HepG2 (cell line): ENCODE measurements at regions of chr4 and their contacts with region 1.

Region 1: DNA sequence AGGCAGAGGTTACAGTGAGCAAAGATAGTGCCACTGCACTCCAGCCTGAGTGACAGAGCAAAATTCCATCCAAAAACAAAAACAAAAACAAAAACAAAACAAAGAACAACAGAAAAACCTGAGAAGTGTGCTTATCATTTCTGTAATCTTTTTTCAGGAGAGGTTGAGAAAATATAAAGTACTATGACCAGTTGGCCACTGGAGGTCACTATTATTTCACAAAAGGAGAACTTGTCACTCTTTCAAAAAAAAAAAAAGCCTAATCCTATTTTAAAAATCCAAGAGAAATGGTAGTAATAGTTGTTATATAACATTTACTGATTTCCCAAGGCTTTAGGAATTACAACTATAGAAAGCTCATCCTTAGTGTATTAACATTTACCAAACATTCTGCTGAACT is 24.9 kb upstream of the RNF150 start:
- DNase-seq: peak; percentile 31
- ATAC-seq: no peak; the same call in 2 of the 3 replicates
- H3K4me3 ChIP-seq: no peak overlapping the region
- H3K27ac ChIP-seq: no peak overlapping the region
- H3K4me1 ChIP-seq: no peaks in the 10 kb centered on the region
- H3K27me3 ChIP-seq: no peaks in the 10 kb centered on the region
- CTCF ChIP-seq: peak; percentile 45
- EP300 ChIP-seq: no peak
- POLR2A ChIP-seq: no peak
- RAD21 ChIP-seq: no peak

Region 2: GRCh38 chr4:141346144-141346543 is 187.9 kb after region 1 on chr4:
- CTCF ChIA-PET with region 1: no interaction called
- POLR2A ChIA-PET with region 1: no interaction called
- in situ Hi-C with region 1: no loop called
- intact Hi-C with region 1: loop called (anchors 10 kb)
- DNase-seq: peak; percentile 13
- ATAC-seq: peak; percentile 87
- H3K4me3 ChIP-seq: no peak overlapping the region
- H3K27ac ChIP-seq: no peak overlapping the region
- H3K4me1 ChIP-seq: no peaks in the 10 kb centered on the region
- H3K27me3 ChIP-seq: no peaks in the 10 kb centered on the region
- CTCF ChIP-seq: peak; percentile 56
- EP300 ChIP-seq: no peak
- POLR2A ChIP-seq: no peak
- RAD21 ChIP-seq: peak; percentile 52; the same call in 1 of the 2 replicates

Region 3: GRCh38 chr4:141654098-141654497 is 495.9 kb after region 1 on chr4:
- CTCF ChIA-PET with region 1: no interaction called
- POLR2A ChIA-PET with region 1: no interaction called
- in situ Hi-C with region 1: no loop called
- intact Hi-C with region 1: loop called (anchors 2 kb)
- DNase-seq: no peak
- ATAC-seq: peak; percentile 91
- H3K4me3 ChIP-seq: no peak overlapping the region
- H3K27ac ChIP-seq: no peak overlapping the region
- H3K4me1 ChIP-seq: no peaks in the 10 kb centered on the region
- H3K27me3 ChIP-seq: no peaks in the 10 kb centered on the region
- CTCF ChIP-seq: peak; percentile 64
- EP300 ChIP-seq: no peak
- POLR2A ChIP-seq: no peak
- RAD21 ChIP-seq: no peak

Region 4: DNA sequence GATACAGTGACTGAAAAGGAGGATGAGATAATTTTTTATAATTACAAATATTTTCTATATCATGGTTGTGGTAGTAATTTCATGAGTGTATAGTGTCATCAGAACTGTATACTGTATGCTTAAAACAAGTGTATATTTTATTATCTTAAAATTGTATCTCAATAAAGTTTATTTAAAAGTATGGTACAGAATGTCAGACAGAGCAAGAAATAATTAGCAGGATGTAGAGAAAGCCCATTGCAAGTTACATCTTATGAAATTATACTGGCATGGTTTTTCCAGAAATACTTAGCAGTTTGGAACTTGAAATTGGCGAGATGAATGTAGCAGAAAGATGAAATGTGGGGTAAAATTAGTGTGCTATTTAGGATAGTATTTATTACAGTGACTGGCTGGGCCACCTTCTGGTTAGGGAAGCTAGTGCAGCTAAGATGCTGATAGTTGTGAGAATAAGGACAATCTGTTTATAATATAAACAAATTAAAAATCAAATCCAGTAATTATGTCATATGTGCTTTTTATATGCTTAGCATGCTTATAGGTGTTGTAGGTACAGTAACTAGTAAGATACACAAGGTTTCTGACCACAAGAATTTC is 552.9 kb after region 1 on chr4:
- CTCF ChIA-PET with region 1: no interaction called
- POLR2A ChIA-PET with region 1: no interaction called
- in situ Hi-C with region 1: no loop called
- intact Hi-C with region 1: loop called (anchors 5 kb)
- DNase-seq: no peak
- ATAC-seq: 0 out of 3 replicates have a peak, but pooled peaks have one; percentile 38
- H3K4me3 ChIP-seq: no peak overlapping the region
- H3K27ac ChIP-seq: no peak overlapping the region
- H3K4me1 ChIP-seq: no peaks in the 10 kb centered on the region
- H3K27me3 ChIP-seq: no peaks in the 10 kb centered on the region
- CTCF ChIP-seq: 0 out of 2 replicates have a peak, but pooled peaks have one; percentile 20
- EP300 ChIP-seq: no peak
- POLR2A ChIP-seq: no peak
- RAD21 ChIP-seq: no peak

Region 5: GRCh38 chr4:142719854-142720541 is 1561.8 kb after region 1 on chr4:
- CTCF ChIA-PET with region 1: no interaction called
- POLR2A ChIA-PET with region 1: no interaction called
- in situ Hi-C with region 1: no loop called
- intact Hi-C with region 1: loop called (anchors 5 kb)
- DNase-seq: no peak
- ATAC-seq: no peak
- H3K4me3 ChIP-seq: no peak overlapping the region
- H3K27ac ChIP-seq: no peak overlapping the region
- H3K4me1 ChIP-seq: no peaks in the 10 kb centered on the region
- H3K27me3 ChIP-seq: no peaks in the 10 kb centered on the region
- CTCF ChIP-seq: no peak
- EP300 ChIP-seq: no peak
- POLR2A ChIP-seq: no peak
- RAD21 ChIP-seq: no peak

Region 6: GRCh38 chr4:142846729-142847596 is 1688.7 kb after region 1 on chr4:
- CTCF ChIA-PET with region 1: no interaction called
- POLR2A ChIA-PET with region 1: no interaction called
- in situ Hi-C with region 1: loop called (anchors 25 kb)
- intact Hi-C with region 1: no loop called
- DNase-seq: peak; percentile 10
- ATAC-seq: peak; percentile 95
- H3K4me3 ChIP-seq: no peak overlapping the region
- H3K27ac ChIP-seq: no peak overlapping the region
- H3K4me1 ChIP-seq: no peaks in the 10 kb centered on the region
- H3K27me3 ChIP-seq: peaks cover 2 to 21% of the 10 kb centered on the region in 2 experiments; a peak in 4 of 5 replicates
- CTCF ChIP-seq: peak; percentile 55
- EP300 ChIP-seq: no peak
- POLR2A ChIP-seq: no peak
- RAD21 ChIP-seq: no peak